Adrenal gland (tissue), 19 donors: ENCODE measurements at regions of chr1 and their contacts with region 1.

Region 1: GRCh38 chr1:76154206-76154956 is 79.8 kb downstream of the ST6GALNAC3 start:
- DNase-seq: peak; percentile 68 to 92 (median 78)
- H3K4me3 ChIP-seq: peak overlapping the region in 3 of 4 donors; percentile 33 to 51 (median 40)
- H3K27ac ChIP-seq: peak overlapping the region in 1 of 5 donors; percentile 33
- H3K4me1 ChIP-seq: peaks cover 5 to 8% of the 10 kb centered on the region in 2 donors
- H3K27me3 ChIP-seq: no peaks in the 10 kb centered on the region
- CTCF ChIP-seq: peak; percentile 85 to 97 (median 90)
- POLR2A ChIP-seq: no peak

Region 2: DNA sequence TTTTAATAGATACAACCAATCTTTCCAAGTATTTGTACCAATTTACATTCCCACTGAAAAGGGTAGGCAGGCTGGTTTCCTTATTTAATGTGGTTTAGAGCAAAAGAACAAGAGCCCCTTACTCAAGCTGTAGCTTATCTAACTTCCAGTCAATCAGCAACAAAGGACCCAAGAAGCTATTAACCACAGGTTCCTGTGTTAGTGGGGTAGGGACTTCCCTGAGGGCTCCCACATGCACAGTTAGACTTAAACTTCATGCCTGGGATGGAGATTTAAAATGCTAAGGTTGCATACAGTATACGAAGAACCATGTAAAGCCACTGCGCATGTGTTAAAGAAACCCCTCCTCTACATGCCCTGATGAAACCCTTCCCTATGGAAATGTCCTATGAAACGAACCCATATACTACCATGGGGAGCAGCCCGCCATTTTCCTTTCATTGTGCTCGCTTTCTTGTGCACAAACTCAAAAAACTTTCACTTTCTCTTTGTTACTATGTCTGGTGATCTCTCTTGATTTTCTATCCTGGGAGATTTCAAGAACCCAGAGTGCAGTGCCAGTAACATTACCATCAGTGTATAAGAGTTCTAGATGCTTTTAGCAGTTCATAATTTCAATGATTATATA is 689.6 kb after region 1 on chr1:
- intact Hi-C with region 1: loop called in 1 of 2 experiments (anchors 5 kb)
- DNase-seq: no peak
- H3K4me3 ChIP-seq: no peak overlapping the region
- H3K27ac ChIP-seq: no peak overlapping the region
- H3K4me1 ChIP-seq: no peaks in the 10 kb centered on the region
- H3K27me3 ChIP-seq: no peaks in the 10 kb centered on the region
- CTCF ChIP-seq: no peak
- POLR2A ChIP-seq: no peak